AG04449 (cell line): ENCODE measurements at regions of chr7 and their contacts with region 1.

Region 1: DNA sequence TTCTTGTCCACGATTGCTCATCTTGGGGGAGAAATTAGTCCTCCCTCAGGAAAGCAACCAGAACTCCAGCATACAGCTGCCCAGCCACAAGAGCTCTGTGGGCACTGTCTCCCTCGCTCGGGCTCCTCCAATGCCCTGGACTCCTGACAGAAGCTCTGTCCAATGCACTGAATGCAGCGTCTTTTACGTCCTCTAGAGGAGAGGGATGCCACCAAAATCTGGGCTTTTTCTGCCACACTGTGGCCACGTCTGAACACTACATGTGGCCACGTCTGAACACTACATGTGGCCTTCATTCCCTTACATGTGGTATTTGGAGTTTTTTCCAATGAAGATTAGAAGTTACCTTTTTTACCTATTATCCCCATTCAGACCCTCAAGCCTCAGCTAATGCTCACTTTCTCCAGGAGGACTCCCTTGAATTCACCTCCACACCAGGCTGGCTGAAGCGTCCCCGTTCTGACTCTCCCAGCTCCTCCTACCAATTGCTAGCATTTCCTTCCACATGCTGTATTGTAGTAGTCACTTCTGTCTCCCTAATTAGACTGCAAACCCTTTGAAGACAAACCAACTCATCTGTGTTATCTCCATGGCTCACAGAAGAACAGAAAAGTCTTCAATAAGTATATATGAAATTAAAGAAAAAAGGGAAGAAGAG is 134.3 kb upstream of the PDE1C start:
- DNase-seq: peak; percentile 40
- H3K4me3 ChIP-seq: no peak overlapping the region
- CTCF ChIP-seq: peak; percentile 77

Region 2: GRCh38 chr7:31648288-31648687 is 556.2 kb before region 1 on chr7:
- CTCF ChIA-PET with region 1: interaction called, 27 read pairs
- POLR2A ChIA-PET with region 1: no interaction called
- DNase-seq: no peak
- H3K4me3 ChIP-seq: no peak overlapping the region
- CTCF ChIP-seq: peak; percentile 8

Region 3: DNA sequence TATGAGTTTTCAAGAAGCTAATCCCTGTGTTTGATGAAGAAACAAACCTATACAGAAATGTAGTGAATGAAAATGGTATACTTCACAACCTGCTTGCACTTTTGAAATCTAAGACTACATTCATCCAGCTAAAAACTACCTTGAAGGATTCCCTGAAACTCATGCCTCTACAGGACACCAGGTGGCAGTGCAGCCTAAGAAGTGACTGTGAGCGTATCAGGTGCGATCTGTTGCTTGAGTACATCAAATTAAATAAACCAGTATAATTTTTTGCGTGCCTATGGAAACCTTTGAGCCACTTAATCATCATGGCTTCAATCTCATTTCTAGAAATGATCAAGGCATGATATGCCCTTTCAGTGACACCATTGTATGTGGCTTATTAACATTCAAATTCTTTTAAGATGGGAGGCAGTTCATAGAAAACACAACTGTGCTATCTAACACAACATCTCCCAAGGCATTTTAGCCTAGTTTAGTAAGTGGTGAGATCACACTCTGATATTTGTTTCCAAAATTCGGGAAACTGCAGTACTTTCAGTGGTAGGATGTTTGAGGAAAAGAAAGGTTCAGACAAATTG is 460.1 kb before region 1 on chr7:
- CTCF ChIA-PET with region 1: interaction called, 206 read pairs
- POLR2A ChIA-PET with region 1: no interaction called
- DNase-seq: peak; percentile 29
- H3K4me3 ChIP-seq: no peak overlapping the region
- CTCF ChIP-seq: peak; percentile 76

Region 4: GRCh38 chr7:32070406-32071360 is 133.8 kb before region 1 on chr7 and contains the start of gene PDE1C:
- CTCF ChIA-PET with region 1: interaction called, 20 read pairs
- POLR2A ChIA-PET with region 1: no interaction called
- DNase-seq: no peak
- H3K4me3 ChIP-seq: peak within 1 kb of the TSS; percentile 77
- CTCF ChIP-seq: no peak

Region 5: GRCh38 chr7:32347244-32347828 is 142.8 kb after region 1 on chr7:
- CTCF ChIA-PET with region 1: interaction called, 20 read pairs
- POLR2A ChIA-PET with region 1: no interaction called
- DNase-seq: no peak
- H3K4me3 ChIP-seq: no peak overlapping the region
- CTCF ChIP-seq: peak; percentile 34

Region 6: GRCh38 chr7:32479574-32480200 is 275.2 kb after region 1 on chr7:
- CTCF ChIA-PET with region 1: interaction called, 255 read pairs
- POLR2A ChIA-PET with region 1: no interaction called
- DNase-seq: no peak
- H3K4me3 ChIP-seq: no peak overlapping the region
- CTCF ChIP-seq: peak; percentile 81